HCT116 (cell line): ENCODE measurements at regions of chr15 and their contacts with region 1.

Region 1: DNA sequence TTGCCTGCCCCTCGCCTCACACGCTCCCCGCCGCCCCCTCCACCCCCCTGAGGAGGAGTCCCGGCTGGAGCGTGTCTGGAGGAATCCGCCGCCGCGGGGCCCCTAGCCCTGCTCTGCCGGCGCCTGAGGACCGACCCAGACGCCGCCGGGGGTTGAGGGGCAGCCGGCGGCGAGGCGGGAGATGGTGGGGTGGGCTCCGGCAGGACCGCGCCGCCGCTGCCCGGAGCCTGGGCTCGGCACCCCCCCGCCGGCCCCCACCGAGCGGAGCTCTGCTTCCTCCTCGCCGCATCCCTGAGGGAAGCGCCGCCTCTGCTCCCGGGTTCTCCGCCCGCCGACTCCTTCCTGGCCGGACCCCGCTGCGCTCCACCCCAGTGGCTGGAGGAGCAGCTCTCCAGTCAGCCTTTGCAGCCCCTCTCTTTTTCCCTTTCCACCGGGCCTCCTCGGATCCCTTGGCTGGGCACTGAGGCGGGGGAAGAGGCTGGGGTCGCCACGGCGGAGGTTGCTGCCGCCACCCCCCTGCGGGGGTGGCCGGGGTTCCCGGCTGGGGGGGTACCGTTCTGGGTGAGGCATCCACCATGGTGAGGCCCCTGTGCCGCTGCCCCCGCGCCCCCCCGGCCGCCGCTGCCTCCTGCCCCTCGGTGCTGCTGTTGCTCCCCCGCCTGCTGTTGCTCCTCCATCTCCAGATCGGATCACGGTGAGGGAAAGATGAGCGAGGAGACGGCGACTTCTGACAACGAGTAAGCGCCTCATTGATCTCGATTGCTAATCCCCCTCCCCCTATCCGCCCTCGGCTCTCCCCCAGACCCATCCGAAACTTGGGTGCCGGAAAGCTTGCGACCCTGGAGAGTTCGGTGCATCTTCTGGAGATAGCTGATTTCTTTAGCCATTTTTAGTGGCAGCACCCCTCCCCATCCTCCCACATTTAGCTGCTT is at the start of gene SPRED1:
- DNase-seq: no peak
- ATAC-seq: peak; percentile 48
- H3K4me3 ChIP-seq: peak within 1 kb of the TSS; percentile 75 to 91
- H3K27ac ChIP-seq: peak within 1 kb of the TSS; percentile 91
- H3K4me1 ChIP-seq: peaks cover 15 to 30% of the 10 kb centered on the region in 2 experiments
- H3K27me3 ChIP-seq: no peaks in the 10 kb centered on the region
- CTCF ChIP-seq: no peak
- POLR2A ChIP-seq: no peak
- RAD21 ChIP-seq: no peak
- total RNA-seq, gene SPRED1: 24.7 TPM

Region 2: GRCh38 chr15:38072348-38073177 is 180.2 kb before region 1 on chr15:
- CTCF ChIA-PET with region 1: interaction called, 3 read pairs
- POLR2A ChIA-PET with region 1: interaction called, 7 read pairs
- RAD21 ChIA-PET with region 1: no interaction called
- intact Hi-C with region 1: loop called (anchors 5 kb)
- DNase-seq: peak; percentile 76
- ATAC-seq: peak; percentile 87
- H3K4me3 ChIP-seq: peak overlapping the region; percentile 52 to 62
- H3K27ac ChIP-seq: peak overlapping the region; percentile 76
- H3K4me1 ChIP-seq: peaks cover 26 to 35% of the 10 kb centered on the region in 2 experiments
- H3K27me3 ChIP-seq: no peaks in the 10 kb centered on the region
- CTCF ChIP-seq: peak in 1 of 3 experiments; percentile 12; a peak in 1 of 6 replicates
- POLR2A ChIP-seq: peak; percentile 10
- RAD21 ChIP-seq: peak; percentile 41; the same call in 1 of the 2 replicates

Region 3: GRCh38 chr15:38226608-38227266 is 26.0 kb before region 1 on chr15:
- CTCF ChIA-PET with region 1: no interaction called
- POLR2A ChIA-PET with region 1: interaction called, 15 read pairs
- RAD21 ChIA-PET with region 1: no interaction called
- intact Hi-C with region 1: no loop called
- DNase-seq: peak; percentile 85
- ATAC-seq: peak; percentile 79
- H3K4me3 ChIP-seq: no peak overlapping the region
- H3K27ac ChIP-seq: no peak overlapping the region
- H3K4me1 ChIP-seq: peaks cover 4 to 11% of the 10 kb centered on the region in 2 experiments; a peak in 3 of 4 replicates
- H3K27me3 ChIP-seq: no peaks in the 10 kb centered on the region
- CTCF ChIP-seq: no peak
- POLR2A ChIP-seq: no peak
- RAD21 ChIP-seq: no peak